H1 (cell line): ENCODE measurements at regions of chr3 and their contacts with region 1.

Region 1: GRCh38 chr3:187669675-187670504 is at the start of gene SST:
- DNase-seq: peak in 1 of 2 experiments; percentile 85
- H3K4me3 ChIP-seq: peak within 1 kb of the TSS in 3 of 4 experiments; percentile 28 to 53 (median 37); a peak in 5 of 8 replicates
- H3K27ac ChIP-seq: no peak within 1 kb of the TSS
- H3K4me1 ChIP-seq: peaks cover 0 to 3% (median 0%) of the 10 kb centered on the region in 4 experiments; a peak in 1 of 7 replicates
- H3K27me3 ChIP-seq: peaks cover 1 to 14% (median 7%) of the 10 kb centered on the region in 4 experiments; a peak in 5 of 7 replicates
- CTCF ChIP-seq: no peak
- EP300 ChIP-seq: no peak
- POLR2A ChIP-seq: no peak
- RAD21 ChIP-seq: peak; percentile 14 to 16; a peak in 2 of 4 replicates
- total RNA-seq, gene SST: 1.3 TPM in 1 of 2 replicates, not detected in the other

Region 2: GRCh38 chr3:187616307-187616972 is 53.5 kb before region 1 on chr3:
- CTCF ChIA-PET with region 1: interaction called, 124 read pairs
- POLR2A ChIA-PET with region 1: interaction called, 3 read pairs
- DNase-seq: peak; percentile 38 to 76
- H3K4me3 ChIP-seq: no peak overlapping the region
- H3K27ac ChIP-seq: no peak overlapping the region
- H3K4me1 ChIP-seq: peaks cover 2 to 10% (median 7%) of the 10 kb centered on the region in 4 experiments; a peak in 5 of 7 replicates
- H3K27me3 ChIP-seq: peaks cover 22 to 33% (median 27%) of the 10 kb centered on the region in 4 experiments; a peak in 5 of 7 replicates
- CTCF ChIP-seq: peak; percentile 52 to 77 (median 72)
- EP300 ChIP-seq: no peak
- POLR2A ChIP-seq: no peak
- RAD21 ChIP-seq: peak; percentile 77 to 83